Dorsolateral prefrontal cortex (tissue), 120 donors: ENCODE measurements at regions of chr6 and their contacts with region 1.

Region 1: DNA sequence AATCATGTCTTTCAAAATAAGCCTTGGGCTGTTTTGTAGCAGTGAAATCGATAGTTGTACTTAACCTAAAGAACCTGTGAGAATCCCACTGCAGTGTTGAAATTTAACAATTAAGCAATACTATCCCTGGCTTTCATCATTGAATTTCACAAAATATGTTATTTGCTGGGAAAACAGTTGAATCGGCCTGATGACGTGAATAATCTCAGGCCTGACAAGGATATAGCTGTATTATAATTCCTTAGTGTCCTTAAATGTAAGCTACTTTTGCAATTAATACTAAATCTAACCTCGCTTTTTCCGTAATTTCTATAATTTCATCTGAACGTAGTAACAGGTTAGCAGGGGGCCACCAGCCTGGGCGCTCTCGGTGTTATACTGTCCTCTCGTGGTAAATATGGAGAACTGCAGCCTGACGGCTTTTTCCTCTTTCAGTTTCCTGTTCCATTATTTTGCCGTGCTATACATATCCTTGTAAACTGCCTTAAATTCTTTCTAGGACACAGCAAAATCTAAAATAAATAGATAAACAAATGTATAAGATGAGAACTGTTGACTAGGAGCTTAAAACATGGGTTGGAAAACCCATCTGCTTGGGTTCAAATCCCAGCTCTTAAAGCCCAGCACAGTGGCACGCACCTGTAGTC is 24.0 kb downstream of the MTFR2 start:
- DNase-seq: peak in 6 of 10 donors; percentile 12 to 55 (median 41)
- H3K4me3 ChIP-seq: peak overlapping the region in 52 of 59 donors; percentile 1 to 58 (median 36)
- H3K27ac ChIP-seq: peak overlapping the region in 8 of 59 donors; percentile 11 to 49 (median 18)
- H3K27me3 ChIP-seq: no peaks in the 10 kb centered on the region
- CTCF ChIP-seq: peak; percentile 97 to 100 (median 100)

Region 2: GRCh38 chr6:135451693-135452092 is 774.5 kb before region 1 on chr6:
- intact Hi-C with region 1: loop called in 1 of 2 experiments (anchors 5 kb)
- DNase-seq: no peak
- H3K4me3 ChIP-seq: no peak overlapping the region
- H3K27ac ChIP-seq: no peak overlapping the region
- H3K27me3 ChIP-seq: no peaks in the 10 kb centered on the region
- CTCF ChIP-seq: peak; percentile 52 to 89 (median 76)

Region 3: DNA sequence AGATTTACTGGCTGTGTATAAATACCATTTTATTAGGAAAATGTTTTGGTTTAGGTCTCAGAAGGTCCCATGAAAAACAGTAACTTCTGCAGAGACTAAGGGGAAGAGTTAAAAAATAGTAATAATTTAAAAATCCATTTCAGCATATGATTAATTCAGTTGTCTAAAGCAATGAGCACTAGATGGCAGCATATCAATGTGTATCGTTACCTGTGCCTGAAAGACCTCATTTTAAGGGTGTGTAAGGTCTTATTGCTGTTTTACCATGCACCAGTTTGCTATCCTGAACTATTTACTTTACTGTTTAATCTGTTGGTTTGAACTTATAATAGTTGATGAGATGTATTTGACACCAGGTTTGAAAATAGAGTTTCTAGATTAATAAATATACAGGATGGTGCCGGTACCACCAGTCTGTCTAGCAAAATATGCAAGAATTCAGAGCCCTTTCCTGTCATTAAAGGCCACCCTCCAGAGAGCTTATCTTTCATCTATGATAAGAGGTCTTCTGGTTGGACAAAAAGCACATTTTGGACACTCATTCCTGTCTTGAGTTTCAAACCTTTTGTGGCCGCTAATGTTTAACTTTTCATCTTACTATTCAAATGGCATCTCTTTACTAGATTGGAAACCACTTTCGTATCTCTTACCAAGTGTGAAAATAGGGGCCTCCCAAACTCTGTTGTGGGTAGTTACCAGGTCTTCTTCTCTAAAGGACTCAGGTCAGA is 719.7 kb before region 1 on chr6:
- intact Hi-C with region 1: loop called in 1 of 2 experiments (anchors 10 kb)
- DNase-seq: no peak
- H3K4me3 ChIP-seq: no peak overlapping the region
- H3K27ac ChIP-seq: no peak overlapping the region
- H3K27me3 ChIP-seq: no peaks in the 10 kb centered on the region
- CTCF ChIP-seq: peak; percentile 25 to 82 (median 56)

Region 4: GRCh38 chr6:135535989-135536414 is 690.1 kb before region 1 on chr6:
- intact Hi-C with region 1: loop called (anchors 5 kb)
- DNase-seq: no peak
- H3K4me3 ChIP-seq: no peak overlapping the region
- H3K27ac ChIP-seq: no peak overlapping the region
- H3K27me3 ChIP-seq: no peaks in the 10 kb centered on the region
- CTCF ChIP-seq: peak; percentile 57 to 89 (median 75)

Region 5: DNA sequence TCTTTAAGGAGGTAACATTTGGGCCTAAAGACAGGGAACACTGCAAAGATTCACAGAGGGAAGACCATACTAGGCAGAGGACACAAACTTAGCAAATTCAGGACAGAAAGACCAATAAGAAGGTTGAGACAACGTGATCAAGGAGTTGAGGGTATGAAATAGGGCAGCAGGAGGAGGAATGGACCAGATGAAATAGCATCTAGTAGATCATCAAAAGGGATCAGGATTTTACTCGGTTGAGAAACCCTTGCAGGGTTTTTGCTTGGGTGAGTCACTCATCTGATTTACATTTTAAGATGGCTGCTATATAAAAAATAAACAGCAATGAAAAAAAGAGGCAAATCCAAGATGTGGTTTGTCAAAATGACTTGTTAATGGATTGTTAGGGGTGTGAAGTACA is 58.8 kb after region 1 on chr6:
- intact Hi-C with region 1: no loop called
- DNase-seq: no peak
- H3K4me3 ChIP-seq: peak overlapping the region in 26 of 59 donors; percentile 3 to 41 (median 16)
- H3K27ac ChIP-seq: peak overlapping the region in 6 of 59 donors; percentile 5 to 39 (median 22)
- H3K27me3 ChIP-seq: no peaks in the 10 kb centered on the region
- CTCF ChIP-seq: no peak